Naive thymus-derived CD4-positive, alpha-beta T cell (primary cell): ENCODE measurements at regions of chr10 and their contacts with region 1.

Region 1: GRCh38 chr10:6163364-6164270 is 39.1 kb upstream of the PFKFB3 start:
- DNase-seq: peak; percentile 89 to 95 (median 94)
- ATAC-seq: peak; percentile 96
- H3K4me3 ChIP-seq: peak overlapping the region; percentile 81
- H3K4me3 Mint-ChIP-seq: peak overlapping the region; percentile 85 to 95 (median 92)
- H3K27ac ChIP-seq: peak overlapping the region; percentile 95
- H3K27ac Mint-ChIP-seq: peak overlapping the region; percentile 91 to 99 (median 97)
- H3K4me1 ChIP-seq: peaks cover 25 to 33% of the 10 kb centered on the region in 2 donors
- H3K4me1 Mint-ChIP-seq: peaks cover 30 to 64% (median 57%) of the 10 kb centered on the region in 7 donors
- H3K27me3 ChIP-seq: no peaks in the 10 kb centered on the region
- H3K27me3 Mint-ChIP-seq: no peaks in the 10 kb centered on the region

Region 2: GRCh38 chr10:5889624-5890451 is 273.8 kb before region 1 on chr10 and contains the starts of genes ANKRD16 and FBH1:
- CTCF ChIA-PET with region 1: no interaction called
- POLR2A ChIA-PET with region 1: interaction called, 3 read pairs
- intact Hi-C with region 1: loop called in 1 of 2 experiments (anchors 10 kb)
- DNase-seq: peak; percentile 94 to 100 (median 96)
- ATAC-seq: peak; percentile 96
- H3K4me3 ChIP-seq: peak within 1 kb of the TSS; percentile 70
- H3K4me3 Mint-ChIP-seq: peak within 1 kb of the TSS; percentile 90 to 97 (median 94)
- H3K27ac ChIP-seq: peak within 1 kb of the TSS; percentile 81
- H3K27ac Mint-ChIP-seq: peak within 1 kb of the TSS; percentile 80 to 94 (median 87)
- H3K4me1 ChIP-seq: peaks cover 12% of the 10 kb centered on the region in 2 donors
- H3K4me1 Mint-ChIP-seq: peaks cover 34 to 64% (median 60%) of the 10 kb centered on the region in 7 donors
- H3K27me3 ChIP-seq: no peaks in the 10 kb centered on the region
- H3K27me3 Mint-ChIP-seq: no peaks in the 10 kb centered on the region
- total RNA-seq, gene ANKRD16: 4.6 to 9.8 (median 7.2) TPM
- total RNA-seq, gene FBH1: 64.8 to 105 (median 78.6) TPM

Region 3: GRCh38 chr10:6108603-6109443 is 54.8 kb before region 1 on chr10:
- CTCF ChIA-PET with region 1: no interaction called
- POLR2A ChIA-PET with region 1: no interaction called
- intact Hi-C with region 1: loop called in 1 of 2 experiments (anchors 1 kb)
- DNase-seq: peak in 7 of 9 donors; percentile 38 to 66 (median 62)
- ATAC-seq: peak; percentile 85
- H3K4me3 ChIP-seq: no peak overlapping the region
- H3K4me3 Mint-ChIP-seq: peak overlapping the region in 3 of 10 donors; percentile 2 to 37 (median 29)
- H3K27ac ChIP-seq: no peak overlapping the region
- H3K27ac Mint-ChIP-seq: peak overlapping the region; percentile 37 to 91 (median 80)
- H3K4me1 ChIP-seq: peaks cover 10 to 11% of the 10 kb centered on the region in 2 donors
- H3K4me1 Mint-ChIP-seq: peaks cover 11 to 38% (median 23%) of the 10 kb centered on the region in 7 donors
- H3K27me3 ChIP-seq: no peaks in the 10 kb centered on the region
- H3K27me3 Mint-ChIP-seq: no peaks in the 10 kb centered on the region

Region 4: DNA sequence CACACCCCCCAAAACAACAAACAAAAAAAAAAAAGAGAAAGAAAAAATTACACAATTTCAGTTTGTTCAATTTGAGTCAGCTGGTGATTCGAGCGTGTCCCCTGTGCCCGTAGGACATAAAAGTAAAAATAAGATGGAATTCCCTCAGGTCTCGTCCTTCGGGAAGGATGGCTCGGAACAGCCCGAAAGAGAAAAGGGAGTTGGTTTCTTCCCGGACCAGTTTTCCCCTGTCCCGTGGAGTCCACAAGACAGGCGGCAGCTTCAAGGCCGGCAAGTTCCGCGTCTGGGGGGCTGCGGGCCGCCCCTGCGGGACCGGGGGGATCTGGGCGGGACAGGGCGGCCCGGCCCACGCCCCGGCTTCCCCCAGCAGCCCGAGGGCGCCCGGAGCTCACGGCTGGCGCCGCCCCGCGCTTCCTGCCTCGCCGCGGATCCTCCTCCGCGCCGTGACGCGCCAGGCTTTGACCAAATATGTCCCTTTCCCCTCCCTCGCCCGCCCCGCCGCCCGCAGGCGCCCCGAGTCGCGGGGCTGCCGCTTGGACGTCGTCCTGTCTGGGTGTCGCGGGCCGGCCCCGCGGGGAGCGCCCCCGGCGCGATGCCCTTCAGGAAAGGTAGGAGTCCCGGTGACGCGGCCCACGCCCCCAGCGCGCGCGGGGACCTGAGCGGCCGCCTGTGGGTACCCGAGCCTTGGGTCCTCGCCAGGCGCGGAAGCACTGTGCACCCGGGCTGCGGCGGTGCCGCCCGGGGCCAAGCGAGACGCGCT is 19.0 kb before region 1 on chr10:
- CTCF ChIA-PET with region 1: interaction called, 5 read pairs
- POLR2A ChIA-PET with region 1: interaction called, 8 read pairs
- intact Hi-C with region 1: loop called (anchors 1 kb)
- DNase-seq: peak; percentile 79 to 92 (median 85)
- ATAC-seq: peak; percentile 94
- H3K4me3 ChIP-seq: peak overlapping the region; percentile 92
- H3K4me3 Mint-ChIP-seq: peak overlapping the region; percentile 81 to 92 (median 87)
- H3K27ac ChIP-seq: peak overlapping the region; percentile 86
- H3K27ac Mint-ChIP-seq: peak overlapping the region; percentile 74 to 91 (median 84)
- H3K4me1 ChIP-seq: peaks cover 24 to 39% of the 10 kb centered on the region in 2 donors
- H3K4me1 Mint-ChIP-seq: peaks cover 48 to 68% (median 60%) of the 10 kb centered on the region in 7 donors
- H3K27me3 ChIP-seq: no peaks in the 10 kb centered on the region
- H3K27me3 Mint-ChIP-seq: peaks cover 0 to 1% (median 0%) of the 10 kb centered on the region in 5 donors

Region 5: GRCh38 chr10:6151087-6151977 is 12.3 kb before region 1 on chr10:
- CTCF ChIA-PET with region 1: interaction called, 5 read pairs
- POLR2A ChIA-PET with region 1: interaction called, 19 read pairs
- intact Hi-C with region 1: loop called in 1 of 2 experiments (anchors 1 kb)
- DNase-seq: peak; percentile 26 to 58 (median 53)
- ATAC-seq: peak; percentile 79
- H3K4me3 ChIP-seq: peak overlapping the region; percentile 28
- H3K4me3 Mint-ChIP-seq: peak overlapping the region; percentile 70 to 85 (median 80)
- H3K27ac ChIP-seq: peak overlapping the region; percentile 25
- H3K27ac Mint-ChIP-seq: peak overlapping the region; percentile 68 to 92 (median 85)
- H3K4me1 ChIP-seq: peaks cover 1 to 32% of the 10 kb centered on the region in 2 donors
- H3K4me1 Mint-ChIP-seq: peaks cover 49 to 68% (median 59%) of the 10 kb centered on the region in 7 donors
- H3K27me3 ChIP-seq: no peaks in the 10 kb centered on the region
- H3K27me3 Mint-ChIP-seq: no peaks in the 10 kb centered on the region

Region 6: DNA sequence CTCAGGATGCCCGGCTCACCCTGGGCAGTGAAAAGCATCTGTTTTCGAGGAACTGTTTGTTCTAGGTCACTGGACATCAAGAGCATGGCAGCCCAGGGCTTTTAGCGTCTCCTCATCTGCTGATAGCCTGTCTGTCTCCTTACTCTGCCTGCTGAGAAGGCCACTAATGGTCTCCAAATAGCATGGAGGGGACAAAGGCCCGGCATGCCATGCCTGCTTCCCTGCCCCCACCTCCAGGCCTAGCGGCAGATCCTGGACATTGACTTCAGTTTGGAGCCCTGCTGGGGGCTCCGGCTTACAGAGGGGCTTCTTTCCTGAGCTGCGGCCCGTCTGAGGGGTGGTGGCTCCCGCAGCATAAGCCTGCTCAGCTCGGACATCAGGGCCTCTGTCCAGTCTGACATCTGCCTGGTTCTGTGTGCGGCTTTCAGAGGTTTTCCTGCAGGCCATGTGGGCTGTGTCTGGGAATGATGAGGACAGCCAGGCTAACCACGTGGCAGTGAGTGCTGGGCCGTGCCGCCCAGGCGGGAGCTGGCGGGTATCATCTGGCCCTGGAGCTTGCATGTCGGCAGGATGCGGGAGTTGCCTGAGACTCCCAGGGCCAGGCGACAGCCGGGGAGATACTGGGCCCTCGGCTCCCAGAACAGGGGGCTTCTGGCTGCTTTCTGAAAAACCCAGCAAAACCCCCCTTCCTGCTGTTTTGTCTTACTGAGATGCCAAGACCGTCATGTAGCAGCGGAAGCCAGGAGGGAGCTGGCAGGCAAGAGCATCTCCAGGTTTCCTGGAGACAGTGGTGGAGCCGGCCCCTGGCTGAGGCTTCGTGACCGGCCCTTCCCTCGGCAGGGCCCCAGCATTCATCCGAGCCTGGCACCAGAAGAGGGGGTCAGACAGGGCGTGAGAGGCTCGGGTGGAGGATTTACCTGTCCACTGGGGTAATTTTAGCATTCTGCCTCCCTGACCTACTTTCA is 48.3 kb after region 1 on chr10:
- CTCF ChIA-PET with region 1: no interaction called
- POLR2A ChIA-PET with region 1: no interaction called
- intact Hi-C with region 1: no loop called
- DNase-seq: no peak
- ATAC-seq: no peak
- H3K4me3 ChIP-seq: no peak overlapping the region
- H3K4me3 Mint-ChIP-seq: no peak overlapping the region
- H3K27ac ChIP-seq: no peak overlapping the region
- H3K27ac Mint-ChIP-seq: no peak overlapping the region
- H3K4me1 ChIP-seq: no peaks in the 10 kb centered on the region
- H3K4me1 Mint-ChIP-seq: peaks cover 6 to 34% (median 10%) of the 10 kb centered on the region in 7 donors
- H3K27me3 ChIP-seq: no peaks in the 10 kb centered on the region
- H3K27me3 Mint-ChIP-seq: no peaks in the 10 kb centered on the region